Mammary epithelial cell (primary cell): ENCODE measurements at regions of chr4 and their contacts with region 1.

Region 1: DNA sequence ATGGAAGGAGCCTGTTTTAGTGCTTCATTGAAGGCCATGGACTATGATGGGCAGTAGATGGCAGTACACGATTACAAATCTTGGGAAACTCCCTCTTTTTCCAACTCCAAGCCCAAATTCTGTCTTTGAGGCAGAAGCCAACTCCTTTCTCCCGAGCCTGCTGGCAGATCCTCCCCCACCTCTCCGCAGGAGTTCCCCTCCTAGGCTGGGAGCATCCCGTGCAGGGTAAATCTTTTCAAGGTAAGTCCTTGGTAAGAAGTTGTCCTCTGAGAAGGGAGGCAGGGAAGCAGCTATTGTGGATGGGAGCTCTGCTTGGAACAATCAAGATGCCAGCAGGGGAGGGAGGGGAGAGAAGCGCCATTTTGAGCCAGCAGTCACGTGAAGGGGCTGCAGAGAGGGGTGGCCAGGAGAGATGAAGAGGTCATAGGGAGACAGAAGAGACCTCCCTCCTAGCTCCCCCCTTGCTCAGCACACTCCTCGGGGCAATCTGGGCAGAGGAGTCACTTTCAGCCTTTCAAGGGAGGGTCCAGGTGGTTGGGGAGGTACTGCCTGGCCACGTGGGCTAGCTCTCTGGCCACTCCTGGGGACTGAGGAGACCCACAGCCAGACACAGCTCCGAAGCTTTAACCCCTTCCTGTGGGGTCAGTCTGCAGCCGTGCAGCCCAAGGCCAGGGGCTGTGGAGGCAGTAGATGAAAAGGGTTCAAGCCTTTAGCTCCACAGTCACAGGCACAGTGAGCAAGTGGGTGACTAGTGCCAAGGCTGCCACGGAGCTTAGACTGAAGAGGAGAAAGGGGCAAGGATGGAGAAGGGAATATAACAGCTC is 9.6 kb downstream of the CC2D2A start:
- DNase-seq: peak; percentile 76
- H3K4me3 ChIP-seq: peak overlapping the region; percentile 42 to 61 (median 58)
- H3K27ac ChIP-seq: peak overlapping the region; percentile 47
- H3K4me1 ChIP-seq: peaks cover 3% of the 10 kb centered on the region
- H3K27me3 ChIP-seq: no peaks in the 10 kb centered on the region
- CTCF ChIP-seq: peak; percentile 71 to 79

Region 2: DNA sequence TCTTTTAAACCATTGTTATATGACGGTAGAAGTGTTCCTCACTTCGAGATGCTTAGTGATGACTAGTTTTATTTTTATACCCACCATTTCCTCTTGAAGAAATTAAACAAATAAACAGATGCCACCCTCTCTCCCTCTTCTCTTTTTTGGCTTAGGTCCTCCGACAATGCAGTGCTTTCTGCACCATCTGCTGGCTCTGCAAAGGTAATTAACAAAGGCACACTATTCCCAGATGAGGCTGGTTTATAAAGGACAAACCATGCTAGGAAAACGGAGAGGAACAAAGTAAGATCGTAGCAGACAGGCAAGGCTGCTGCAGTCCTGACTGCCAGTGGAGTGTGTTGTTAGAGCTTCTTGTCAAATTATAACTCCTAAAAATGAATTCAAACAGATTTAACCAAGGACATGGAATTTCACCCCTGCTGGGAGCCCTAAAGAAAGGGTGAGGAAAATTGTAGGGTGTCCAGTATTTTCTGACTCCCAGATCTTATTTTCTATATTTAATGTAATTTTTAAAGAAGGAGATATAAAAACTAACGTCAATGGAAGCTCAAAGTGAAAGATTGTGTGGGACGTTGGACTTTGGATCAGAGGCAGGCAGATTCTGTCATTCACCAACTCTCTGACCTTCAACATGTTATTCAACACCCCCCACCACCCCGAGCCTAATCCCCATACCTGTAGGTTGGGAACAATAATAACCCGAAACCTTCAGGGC is 334.9 kb before region 1 on chr4:
- CTCF ChIA-PET with region 1: no interaction called
- dilution Hi-C with region 1: no loop called
- in situ Hi-C with region 1: no loop called
- intact Hi-C with region 1: no loop called
- DNase-seq: no peak
- H3K4me3 ChIP-seq: no peak overlapping the region
- H3K27ac ChIP-seq: no peak overlapping the region
- H3K4me1 ChIP-seq: peaks cover 3% of the 10 kb centered on the region
- H3K27me3 ChIP-seq: no peaks in the 10 kb centered on the region
- CTCF ChIP-seq: peak in 1 of 2 donors; percentile 8

Region 3: GRCh38 chr4:15526924-15527592 is 47.8 kb after region 1 on chr4:
- CTCF ChIA-PET with region 1: no interaction called
- dilution Hi-C with region 1: no loop called
- in situ Hi-C with region 1: no loop called
- intact Hi-C with region 1: no loop called
- DNase-seq: no peak
- H3K4me3 ChIP-seq: no peak overlapping the region
- H3K27ac ChIP-seq: no peak overlapping the region
- H3K4me1 ChIP-seq: peaks cover 13% of the 10 kb centered on the region
- H3K27me3 ChIP-seq: no peaks in the 10 kb centered on the region
- CTCF ChIP-seq: no peak

Region 4: GRCh38 chr4:15649914-15650545 is 170.7 kb after region 1 on chr4:
- CTCF ChIA-PET with region 1: no interaction called
- dilution Hi-C with region 1: no loop called
- in situ Hi-C with region 1: no loop called
- intact Hi-C with region 1: loop called (anchors 1 kb)
- DNase-seq: peak; percentile 49
- H3K4me3 ChIP-seq: no peak overlapping the region
- H3K27ac ChIP-seq: peak overlapping the region; percentile 20
- H3K4me1 ChIP-seq: peaks cover 17% of the 10 kb centered on the region
- H3K27me3 ChIP-seq: no peaks in the 10 kb centered on the region
- CTCF ChIP-seq: peak; percentile 75

Region 5: DNA sequence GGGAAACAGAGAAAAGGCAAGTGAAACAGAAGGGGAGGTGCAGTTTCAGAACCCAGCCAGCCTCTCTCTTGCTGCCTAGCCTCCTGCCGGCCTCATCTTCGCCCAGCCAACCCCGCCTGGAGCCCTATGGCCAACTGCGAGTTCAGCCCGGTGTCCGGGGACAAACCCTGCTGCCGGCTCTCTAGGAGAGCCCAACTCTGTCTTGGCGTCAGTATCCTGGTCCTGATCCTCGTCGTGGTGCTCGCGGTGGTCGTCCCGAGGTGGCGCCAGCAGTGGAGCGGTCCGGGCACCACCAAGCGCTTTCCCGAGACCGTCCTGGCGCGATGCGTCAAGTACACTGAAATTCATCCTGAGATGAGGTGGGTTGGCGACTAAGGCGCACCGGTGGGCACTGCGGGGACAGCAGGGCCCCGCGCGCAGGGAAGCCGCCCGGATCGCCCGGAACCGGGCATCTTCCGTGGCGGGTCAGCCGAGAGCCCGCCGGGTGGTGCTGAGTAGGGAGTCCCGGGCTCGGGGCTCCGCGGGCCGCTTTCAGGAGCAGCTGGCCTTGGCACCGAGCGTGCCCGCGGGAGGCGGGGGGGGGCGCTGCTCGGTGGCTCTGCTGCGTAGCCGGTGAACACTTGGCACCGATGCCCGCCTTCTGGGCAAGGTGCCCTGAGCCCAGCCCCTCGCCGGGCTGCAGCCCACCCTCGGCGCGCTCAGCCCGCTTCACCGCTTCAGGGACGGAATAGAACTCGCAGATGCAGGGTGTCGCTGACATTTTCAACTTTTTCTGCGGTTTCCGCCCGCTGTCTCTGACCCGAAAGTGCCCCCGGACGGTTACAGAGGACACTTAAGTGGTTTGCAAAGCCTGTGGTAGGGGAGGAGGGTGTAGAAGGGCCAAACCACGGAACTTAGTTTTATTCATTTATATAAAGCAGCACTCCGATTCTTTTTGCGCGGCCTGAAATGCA is 299.3 kb after region 1 on chr4 and contains the start of gene CD38:
- CTCF ChIA-PET with region 1: no interaction called
- dilution Hi-C with region 1: loop called (anchors 25 kb)
- in situ Hi-C with region 1: loop called in 1 of 2 experiments (anchors 25 kb)
- intact Hi-C with region 1: no loop called
- DNase-seq: no peak
- H3K4me3 ChIP-seq: peak within 1 kb of the TSS; percentile 36 to 52 (median 43)
- H3K27ac ChIP-seq: no peak within 1 kb of the TSS
- H3K4me1 ChIP-seq: peaks cover 15% of the 10 kb centered on the region
- H3K27me3 ChIP-seq: peaks cover 9% of the 10 kb centered on the region
- CTCF ChIP-seq: no peak
- total RNA-seq, gene CD38: not detected

Region 6: GRCh38 chr4:15882675-15883086 is 403.4 kb after region 1 on chr4:
- CTCF ChIA-PET with region 1: no interaction called
- dilution Hi-C with region 1: no loop called
- in situ Hi-C with region 1: no loop called
- intact Hi-C with region 1: loop called (anchors 1 kb)
- DNase-seq: peak; percentile 73
- H3K4me3 ChIP-seq: no peak overlapping the region
- H3K27ac ChIP-seq: no peak overlapping the region
- H3K4me1 ChIP-seq: peaks cover 4% of the 10 kb centered on the region
- H3K27me3 ChIP-seq: no peaks in the 10 kb centered on the region
- CTCF ChIP-seq: peak; percentile 90 to 95

Region 7: GRCh38 chr4:15976456-15977447 is 497.5 kb after region 1 on chr4:
- CTCF ChIA-PET with region 1: no interaction called
- dilution Hi-C with region 1: loop called (anchors 25 kb)
- in situ Hi-C with region 1: loop called (anchors 25 kb)
- intact Hi-C with region 1: no loop called
- DNase-seq: no peak
- H3K4me3 ChIP-seq: no peak overlapping the region
- H3K27ac ChIP-seq: no peak overlapping the region
- H3K4me1 ChIP-seq: no peaks in the 10 kb centered on the region
- H3K27me3 ChIP-seq: peaks cover 3% of the 10 kb centered on the region
- CTCF ChIP-seq: no peak